H1 (cell line): ENCODE measurements at regions of chr18 and their contacts with region 1.

Region 1: GRCh38 chr18:62584241-62585120 is 61.7 kb downstream of the ZCCHC2 start:
- DNase-seq: peak; percentile 77 to 93
- H3K4me3 ChIP-seq: peak overlapping the region in 1 of 4 experiments; percentile 43; a peak in 2 of 8 replicates
- H3K27ac ChIP-seq: no peak overlapping the region; the same call in 1 of the 2 replicates
- H3K4me1 ChIP-seq: peaks cover 2 to 8% (median 6%) of the 10 kb centered on the region in 4 experiments; a peak in 6 of 7 replicates
- H3K27me3 ChIP-seq: no peaks in the 10 kb centered on the region
- CTCF ChIP-seq: peak; percentile 91 to 100 (median 98)
- EP300 ChIP-seq: no peak
- POLR2A ChIP-seq: no peak
- RAD21 ChIP-seq: peak; percentile 83 to 90

Region 2: GRCh38 chr18:62425465-62426195 is 158.9 kb before region 1 on chr18:
- CTCF ChIA-PET with region 1: interaction called, 44 read pairs
- POLR2A ChIA-PET with region 1: no interaction called
- DNase-seq: peak; percentile 73 to 77
- H3K4me3 ChIP-seq: peak overlapping the region; percentile 20 to 55 (median 33); a peak in 5 of 8 replicates
- H3K27ac ChIP-seq: no peak overlapping the region
- H3K4me1 ChIP-seq: peaks cover 0 to 8% (median 5%) of the 10 kb centered on the region in 4 experiments; a peak in 5 of 7 replicates
- H3K27me3 ChIP-seq: no peaks in the 10 kb centered on the region
- CTCF ChIP-seq: peak; percentile 29 to 89 (median 88)
- EP300 ChIP-seq: no peak
- POLR2A ChIP-seq: no peak
- RAD21 ChIP-seq: peak; percentile 78 to 85

Region 3: GRCh38 chr18:62571648-62572047 is 12.8 kb before region 1 on chr18:
- CTCF ChIA-PET with region 1: interaction called, 20 read pairs
- POLR2A ChIA-PET with region 1: no interaction called
- DNase-seq: no peak
- H3K4me3 ChIP-seq: no peak overlapping the region
- H3K27ac ChIP-seq: no peak overlapping the region
- H3K4me1 ChIP-seq: no peaks in the 10 kb centered on the region
- H3K27me3 ChIP-seq: no peaks in the 10 kb centered on the region
- CTCF ChIP-seq: no peak
- EP300 ChIP-seq: no peak
- POLR2A ChIP-seq: no peak
- RAD21 ChIP-seq: no peak

Region 4: GRCh38 chr18:62610701-62611411 is 26.4 kb after region 1 on chr18:
- CTCF ChIA-PET with region 1: interaction called, 12 read pairs
- POLR2A ChIA-PET with region 1: no interaction called
- DNase-seq: peak in 1 of 2 experiments; percentile 73
- H3K4me3 ChIP-seq: peak overlapping the region in 3 of 4 experiments; percentile 2 to 16 (median 12); a peak in 4 of 8 replicates
- H3K27ac ChIP-seq: no peak overlapping the region
- H3K4me1 ChIP-seq: peaks cover 10 to 24% (median 19%) of the 10 kb centered on the region in 4 experiments
- H3K27me3 ChIP-seq: peaks cover 0 to 3% (median 0%) of the 10 kb centered on the region in 4 experiments; a peak in 1 of 7 replicates
- CTCF ChIP-seq: no peak
- EP300 ChIP-seq: no peak
- POLR2A ChIP-seq: no peak
- RAD21 ChIP-seq: 0 out of 4 replicates have a peak, but pooled peaks of 1 of the 2 experiments have one; percentile 7

Region 5: GRCh38 chr18:62697636-62698035 is 113.2 kb after region 1 on chr18:
- CTCF ChIA-PET with region 1: interaction called, 23 read pairs
- POLR2A ChIA-PET with region 1: no interaction called
- DNase-seq: no peak
- H3K4me3 ChIP-seq: no peak overlapping the region
- H3K27ac ChIP-seq: no peak overlapping the region
- H3K4me1 ChIP-seq: no peaks in the 10 kb centered on the region
- H3K27me3 ChIP-seq: no peaks in the 10 kb centered on the region
- CTCF ChIP-seq: no peak
- EP300 ChIP-seq: no peak
- POLR2A ChIP-seq: no peak
- RAD21 ChIP-seq: no peak

Region 6: GRCh38 chr18:62781893-62782292 is 197.4 kb after region 1 on chr18:
- CTCF ChIA-PET with region 1: no interaction called
- POLR2A ChIA-PET with region 1: no interaction called
- DNase-seq: no peak
- H3K4me3 ChIP-seq: no peak overlapping the region
- H3K27ac ChIP-seq: no peak overlapping the region
- H3K4me1 ChIP-seq: peaks cover 6 to 28% (median 17%) of the 10 kb centered on the region in 4 experiments; a peak in 6 of 7 replicates
- H3K27me3 ChIP-seq: no peaks in the 10 kb centered on the region
- CTCF ChIP-seq: no peak
- EP300 ChIP-seq: no peak
- POLR2A ChIP-seq: no peak
- RAD21 ChIP-seq: no peak

Region 7: GRCh38 chr18:62982600-62983251 is 398.2 kb after region 1 on chr18:
- CTCF ChIA-PET with region 1: interaction called, 47 read pairs
- POLR2A ChIA-PET with region 1: no interaction called
- DNase-seq: peak; percentile 33 to 74
- H3K4me3 ChIP-seq: no peak overlapping the region
- H3K27ac ChIP-seq: no peak overlapping the region
- H3K4me1 ChIP-seq: no peaks in the 10 kb centered on the region
- H3K27me3 ChIP-seq: no peaks in the 10 kb centered on the region
- CTCF ChIP-seq: peak; percentile 27 to 82 (median 77)
- EP300 ChIP-seq: no peak
- POLR2A ChIP-seq: no peak
- RAD21 ChIP-seq: peak; percentile 86 to 93